Naive thymus-derived CD4-positive, alpha-beta T cell (primary cell): ENCODE measurements at regions of chr7 and their contacts with region 1.

Region 1: GRCh38 chr7:124929467-124930172 is at the start of gene POT1:
- DNase-seq: peak; percentile 88 to 94 (median 92)
- ATAC-seq: peak; percentile 99
- H3K4me3 ChIP-seq: peak within 1 kb of the TSS; percentile 68
- H3K4me3 Mint-ChIP-seq: peak within 1 kb of the TSS; percentile 92 to 99 (median 94)
- H3K27ac ChIP-seq: peak within 1 kb of the TSS; percentile 83
- H3K27ac Mint-ChIP-seq: peak within 1 kb of the TSS; percentile 92 to 98 (median 98)
- H3K4me1 ChIP-seq: peaks cover 9 to 10% of the 10 kb centered on the region in 2 donors
- H3K4me1 Mint-ChIP-seq: peaks cover 27 to 58% (median 51%) of the 10 kb centered on the region in 7 donors
- H3K27me3 ChIP-seq: no peaks in the 10 kb centered on the region
- H3K27me3 Mint-ChIP-seq: peaks cover 0 to 10% (median 0%) of the 10 kb centered on the region in 5 donors
- total RNA-seq, gene POT1: 13.1 to 33.8 (median 28.6) TPM

Region 2: DNA sequence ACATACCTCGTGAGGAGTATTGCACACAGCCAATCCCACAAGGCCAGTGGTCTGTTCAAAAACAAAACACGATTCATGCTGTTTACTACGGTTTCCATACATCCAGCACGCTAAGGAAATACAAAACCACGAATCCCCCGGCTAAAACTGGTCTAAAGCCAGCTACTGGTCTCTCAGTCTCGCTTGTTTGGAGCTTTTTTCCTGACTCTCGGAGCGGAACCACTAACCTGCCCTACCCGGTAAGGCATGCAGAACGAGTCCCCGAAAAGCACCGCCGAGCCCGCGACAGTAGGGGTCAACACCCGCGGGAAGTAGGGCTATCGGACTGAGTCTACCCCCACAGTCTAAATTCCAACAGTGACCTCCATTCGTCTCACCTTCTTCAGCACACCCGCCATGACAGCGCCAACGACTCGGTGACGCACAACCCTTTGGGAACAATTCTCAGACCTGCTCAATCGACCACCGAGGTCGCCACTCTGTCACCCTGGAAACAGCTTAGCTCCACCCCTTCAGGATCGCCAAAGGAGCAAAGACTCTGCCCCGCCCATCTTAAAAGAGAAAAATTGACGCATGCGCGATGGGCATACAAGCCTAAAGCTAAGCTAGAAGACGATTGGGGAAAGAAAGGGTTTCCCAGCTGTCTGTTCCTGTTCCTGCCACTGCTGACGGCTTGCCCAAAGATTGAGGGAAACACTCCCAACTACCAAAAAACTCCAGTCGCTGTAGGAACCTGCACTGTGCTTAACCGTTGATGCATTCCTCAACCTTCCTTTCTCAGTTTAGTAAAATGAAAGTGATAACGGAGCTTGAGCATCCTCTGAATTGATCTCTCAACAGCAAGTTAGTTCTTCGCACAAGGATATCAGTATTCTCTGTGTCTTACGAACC is 1372.0 kb before region 1 on chr7 and contains the start of gene NDUFA5:
- CTCF ChIA-PET with region 1: no interaction called
- POLR2A ChIA-PET with region 1: no interaction called
- intact Hi-C with region 1: loop called (anchors 1 kb)
- DNase-seq: peak; percentile 78 to 99 (median 98)
- ATAC-seq: peak; percentile 100
- H3K4me3 ChIP-seq: peak within 1 kb of the TSS; percentile 95
- H3K4me3 Mint-ChIP-seq: no peak within 1 kb of the TSS
- H3K27ac ChIP-seq: peak within 1 kb of the TSS; percentile 90
- H3K27ac Mint-ChIP-seq: no peak within 1 kb of the TSS
- H3K4me1 ChIP-seq: peaks cover 13 to 15% of the 10 kb centered on the region in 2 donors
- H3K4me1 Mint-ChIP-seq: peaks cover 3 to 16% (median 12%) of the 10 kb centered on the region in 7 donors
- H3K27me3 ChIP-seq: no peaks in the 10 kb centered on the region
- H3K27me3 Mint-ChIP-seq: peaks cover 0 to 6% (median 5%) of the 10 kb centered on the region in 5 donors
- total RNA-seq, gene NDUFA5: 51.2 to 64.1 (median 62.5) TPM

Region 3: GRCh38 chr7:124737744-124738300 is 191.8 kb before region 1 on chr7:
- CTCF ChIA-PET with region 1: no interaction called
- POLR2A ChIA-PET with region 1: no interaction called
- intact Hi-C with region 1: no loop called
- DNase-seq: no peak
- ATAC-seq: no peak
- H3K4me3 ChIP-seq: no peak overlapping the region
- H3K4me3 Mint-ChIP-seq: no peak overlapping the region
- H3K27ac ChIP-seq: no peak overlapping the region
- H3K27ac Mint-ChIP-seq: no peak overlapping the region
- H3K4me1 ChIP-seq: no peaks in the 10 kb centered on the region
- H3K4me1 Mint-ChIP-seq: no peaks in the 10 kb centered on the region
- H3K27me3 ChIP-seq: no peaks in the 10 kb centered on the region
- H3K27me3 Mint-ChIP-seq: peaks cover 0 to 9% (median 3%) of the 10 kb centered on the region in 5 donors